Heart right ventricle (tissue), 16 donors: ENCODE measurements at regions of chr13 and their contacts with region 1.

Region 1: GRCh38 chr13:73618275-73618865 is 515.8 kb downstream of the KLF12 start:
- DNase-seq: no peak
- ATAC-seq: no peak
- H3K4me3 ChIP-seq: no peak overlapping the region
- H3K27ac ChIP-seq: no peak overlapping the region
- H3K4me1 ChIP-seq: peaks cover 0 to 7% (median 0%) of the 10 kb centered on the region in 9 donors
- H3K27me3 ChIP-seq: no peaks in the 10 kb centered on the region
- CTCF ChIP-seq: no peak

Region 2: GRCh38 chr13:72039126-72039525 is 1579.2 kb before region 1 on chr13:
- intact Hi-C with region 1: no loop called
- DNase-seq: no peak
- ATAC-seq: no peak
- H3K4me3 ChIP-seq: no peak overlapping the region
- H3K27ac ChIP-seq: no peak overlapping the region
- H3K4me1 ChIP-seq: no peaks in the 10 kb centered on the region
- H3K27me3 ChIP-seq: no peaks in the 10 kb centered on the region
- CTCF ChIP-seq: no peak

Region 3: DNA sequence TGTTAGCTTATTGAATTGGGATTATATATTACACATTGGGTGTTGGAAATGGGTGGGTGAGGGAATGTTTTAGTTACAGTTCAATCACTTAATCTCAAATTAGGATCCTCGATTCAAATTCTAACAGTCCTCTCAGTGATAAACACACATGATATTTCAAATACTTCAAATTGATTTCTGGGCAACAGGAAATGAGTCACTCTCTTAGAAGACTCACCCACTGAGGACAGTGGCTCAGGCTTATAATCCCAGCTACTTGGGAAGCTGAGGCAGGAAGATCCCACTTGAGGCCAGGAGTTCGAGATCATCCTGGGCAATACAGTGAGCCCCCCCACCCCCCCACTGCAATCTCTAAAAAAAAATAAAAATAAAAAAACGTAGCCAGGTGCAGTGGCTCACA is 80.5 kb after region 1 on chr13:
- intact Hi-C with region 1: no loop called
- DNase-seq: no peak
- ATAC-seq: no peak
- H3K4me3 ChIP-seq: no peak overlapping the region
- H3K27ac ChIP-seq: no peak overlapping the region
- H3K4me1 ChIP-seq: no peaks in the 10 kb centered on the region
- H3K27me3 ChIP-seq: no peaks in the 10 kb centered on the region
- CTCF ChIP-seq: no peak

Region 4: DNA sequence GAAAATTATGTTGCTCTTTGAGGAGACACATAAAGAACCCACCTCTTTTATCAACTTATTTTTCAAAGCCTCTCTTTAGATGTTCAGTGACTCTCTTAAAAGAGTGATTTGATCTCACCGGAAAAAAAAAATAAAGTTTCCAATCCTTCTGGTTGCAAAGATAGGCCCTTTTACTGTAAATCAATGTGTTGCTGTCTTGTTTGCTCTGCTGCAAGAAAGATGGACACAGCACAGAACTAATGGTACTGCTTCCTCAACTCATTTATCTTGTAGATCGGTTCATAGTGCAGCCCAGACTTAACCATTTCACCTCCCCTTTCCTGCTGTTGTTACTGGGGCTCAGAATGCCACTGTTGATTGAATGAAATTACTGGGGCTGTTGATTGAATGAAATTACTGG is 904.7 kb after region 1 on chr13:
- intact Hi-C with region 1: loop called in 1 of 10 experiments (anchors 5 kb)
- DNase-seq: no peak
- ATAC-seq: no peak
- H3K4me3 ChIP-seq: no peak overlapping the region
- H3K27ac ChIP-seq: no peak overlapping the region
- H3K4me1 ChIP-seq: no peaks in the 10 kb centered on the region
- H3K27me3 ChIP-seq: no peaks in the 10 kb centered on the region
- CTCF ChIP-seq: no peak